ENCODE measurements at regions of chr5 and their contacts with region 1.

Region 1: GRCh38 chr5:94347130-94347529 is 271.3 kb downstream of the KIAA0825 start:
- DNase-seq: no peak

Region 2: DNA sequence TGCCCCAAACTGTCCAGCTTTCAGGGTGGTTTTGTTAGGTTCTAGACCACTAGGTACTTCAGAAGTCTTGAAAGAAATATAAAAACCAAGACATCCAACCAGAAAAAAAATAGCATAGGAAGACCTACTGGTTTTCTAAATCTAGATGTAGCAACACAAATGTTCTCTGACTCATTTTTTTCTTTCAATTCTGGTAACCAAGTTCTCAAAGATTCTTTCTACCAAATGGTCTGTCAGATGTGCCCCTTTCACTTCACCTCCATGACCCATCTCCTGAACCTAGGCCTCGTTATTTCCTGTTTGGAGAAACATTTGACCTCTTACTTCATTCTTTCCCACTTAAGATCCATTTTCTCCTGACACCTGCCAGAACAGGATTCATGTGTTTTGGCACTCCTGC is 84.1 kb before region 1 on chr5:
- CTCF ChIA-PET with region 1: no interaction called
- POLR2A ChIA-PET with region 1: no interaction called
- DNase-seq: no peak

Region 3: GRCh38 chr5:94932259-94932658 is 585.1 kb after region 1 on chr5:
- CTCF ChIA-PET with region 1: interaction called, 10 read pairs
- POLR2A ChIA-PET with region 1: no interaction called
- DNase-seq: no peak